ENCODE measurements at regions of chr15 and their contacts with region 1.

Region 1: DNA sequence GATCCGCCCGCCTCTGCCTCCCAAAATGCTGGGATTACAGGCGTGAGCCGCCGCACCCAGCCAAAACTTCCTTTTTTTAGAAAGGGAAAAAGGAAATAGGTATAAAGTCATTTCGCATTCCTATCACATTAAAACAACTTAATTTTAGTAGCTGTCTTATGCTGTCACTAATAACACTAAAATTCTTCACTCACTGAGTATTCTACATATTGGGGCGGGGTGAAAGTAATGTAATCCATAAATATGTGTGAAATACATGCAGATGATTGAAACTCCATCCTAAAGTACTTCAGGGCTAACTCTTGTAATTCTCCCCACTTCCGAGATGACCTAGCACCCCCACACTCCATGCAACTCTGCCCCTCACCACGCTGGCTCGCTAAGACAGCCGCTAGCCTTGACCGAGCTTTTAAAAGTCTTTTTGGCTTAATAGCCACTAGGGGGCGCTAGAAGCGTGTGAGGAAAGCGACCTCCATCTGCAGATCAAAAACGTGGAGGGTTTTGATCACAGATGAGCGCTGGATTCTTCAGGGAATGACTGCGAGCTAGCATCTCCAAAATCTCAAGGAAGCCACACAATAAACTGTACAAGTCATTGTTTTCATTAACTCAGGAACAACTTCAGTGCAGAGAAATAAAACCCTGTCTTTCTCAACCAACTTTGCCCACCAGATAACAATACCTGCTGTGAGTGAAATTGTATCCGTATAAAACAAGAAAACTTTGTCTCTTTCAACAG is 129.3 kb upstream of the IGF1R start:
- DNase-seq: peak; percentile 56
- H3K4me3 Mint-ChIP-seq: no peak overlapping the region
- H3K27ac Mint-ChIP-seq: no peak overlapping the region
- H3K4me1 Mint-ChIP-seq: peaks cover 4% of the 10 kb centered on the region
- H3K27me3 Mint-ChIP-seq: peaks cover 4% of the 10 kb centered on the region

Region 2: GRCh38 chr15:98455965-98456364 is 63.0 kb before region 1 on chr15:
- CTCF ChIA-PET with region 1: no interaction called
- POLR2A ChIA-PET with region 1: no interaction called
- intact Hi-C with region 1: no loop called
- DNase-seq: no peak
- H3K4me3 Mint-ChIP-seq: no peak overlapping the region
- H3K27ac Mint-ChIP-seq: no peak overlapping the region
- H3K4me1 Mint-ChIP-seq: no peaks in the 10 kb centered on the region
- H3K27me3 Mint-ChIP-seq: peaks cover 9% of the 10 kb centered on the region

Region 3: GRCh38 chr15:98548154-98548971 is 29.4 kb after region 1 on chr15:
- CTCF ChIA-PET with region 1: interaction called, 12 read pairs
- POLR2A ChIA-PET with region 1: no interaction called
- intact Hi-C with region 1: no loop called
- DNase-seq: peak; percentile 67
- H3K4me3 Mint-ChIP-seq: peak overlapping the region; percentile 73
- H3K27ac Mint-ChIP-seq: no peak overlapping the region
- H3K4me1 Mint-ChIP-seq: peaks cover 14% of the 10 kb centered on the region
- H3K27me3 Mint-ChIP-seq: peaks cover 48% of the 10 kb centered on the region

Region 4: DNA sequence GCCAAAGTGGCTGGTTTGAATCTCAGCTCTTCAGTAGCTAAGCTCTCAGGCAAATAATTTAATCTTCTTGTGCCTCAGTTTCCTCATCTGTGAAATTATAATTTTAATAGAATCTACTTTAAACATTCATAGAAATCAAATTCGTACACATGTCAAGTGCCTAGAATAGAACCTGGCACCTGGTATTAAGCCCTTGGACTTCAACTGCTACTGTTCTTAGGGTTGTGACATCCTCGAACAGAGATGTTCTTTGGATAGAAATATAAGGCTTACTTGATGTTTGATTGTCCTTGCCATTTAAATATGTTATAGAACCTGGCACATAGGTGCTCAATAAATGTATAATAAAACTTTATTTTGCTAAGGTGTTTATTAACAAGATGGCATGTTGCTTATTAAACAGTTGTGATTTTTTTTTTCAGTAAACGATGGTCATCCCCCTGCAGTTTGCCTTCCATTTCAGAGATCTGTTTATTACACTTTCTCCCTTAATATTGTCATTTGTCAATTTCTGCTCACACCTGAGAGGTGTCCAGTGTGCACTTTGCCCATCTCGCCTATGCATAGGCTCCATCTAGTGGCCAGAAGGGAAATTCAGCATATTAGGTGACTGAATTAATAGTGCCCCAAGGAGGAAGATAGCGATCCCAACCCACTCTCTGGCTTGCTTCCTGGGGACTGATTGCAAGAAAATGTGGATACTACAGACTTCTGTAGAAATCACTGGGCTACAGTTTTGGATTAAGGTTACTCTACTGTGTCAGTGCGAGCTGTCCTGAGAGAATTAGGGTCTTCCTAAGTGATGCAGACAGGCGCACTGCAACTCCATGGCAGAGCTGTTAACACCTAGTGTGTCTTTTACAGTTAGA is 140.1 kb after region 1 on chr15:
- CTCF ChIA-PET with region 1: interaction called, 114 read pairs
- POLR2A ChIA-PET with region 1: no interaction called
- intact Hi-C with region 1: loop called (anchors 1 kb)
- DNase-seq: peak; percentile 27
- H3K4me3 Mint-ChIP-seq: no peak overlapping the region
- H3K27ac Mint-ChIP-seq: no peak overlapping the region
- H3K4me1 Mint-ChIP-seq: peaks cover 4% of the 10 kb centered on the region
- H3K27me3 Mint-ChIP-seq: peaks cover 8% of the 10 kb centered on the region

Region 5: DNA sequence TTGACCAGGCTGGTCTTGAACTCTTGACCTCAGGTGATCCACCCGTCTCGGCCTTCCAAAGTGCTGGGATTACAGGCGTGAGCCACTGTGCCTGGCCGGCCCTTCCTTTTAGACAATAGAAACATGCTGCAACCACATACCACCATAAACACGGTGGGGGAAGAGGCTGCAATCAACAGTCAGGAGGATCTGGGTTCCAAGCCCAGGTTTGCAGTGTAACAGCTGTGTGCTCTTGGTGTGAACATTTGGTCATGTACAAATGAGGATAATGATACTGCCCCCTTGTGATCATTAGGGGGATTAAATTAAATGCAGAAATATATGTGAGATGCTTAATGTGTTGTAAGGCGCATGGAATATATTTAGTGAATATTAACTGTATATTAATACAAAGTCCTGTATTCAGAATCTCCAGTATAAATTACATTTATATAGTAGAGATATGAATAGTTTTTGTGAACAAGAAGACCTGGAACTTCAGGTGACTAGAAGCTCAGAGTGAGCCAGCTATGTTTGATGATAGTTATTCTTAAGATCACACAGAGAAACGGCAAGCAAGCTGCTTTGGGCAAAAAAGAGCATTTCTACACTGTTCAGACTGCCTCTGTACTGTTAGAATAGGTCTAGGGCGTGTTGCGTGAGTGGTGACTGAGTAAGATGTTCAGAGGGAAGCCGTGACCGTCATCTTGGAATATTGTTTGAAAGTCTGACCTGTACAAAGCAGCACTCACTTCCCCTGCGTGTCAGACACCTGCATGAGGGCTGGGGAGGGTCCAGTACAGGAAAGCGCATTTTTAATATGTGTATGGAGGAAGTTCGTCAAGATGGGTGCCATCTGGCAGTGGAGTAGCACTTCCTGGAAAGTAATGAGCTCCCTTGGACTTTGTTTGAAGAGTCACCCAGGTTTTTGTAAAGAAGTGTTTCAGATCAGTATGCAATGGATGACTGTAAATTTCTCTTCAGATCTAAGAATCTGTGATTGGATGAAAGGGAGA is 362.8 kb after region 1 on chr15:
- CTCF ChIA-PET with region 1: interaction called, 23 read pairs
- POLR2A ChIA-PET with region 1: no interaction called
- intact Hi-C with region 1: no loop called
- DNase-seq: no peak
- H3K4me3 Mint-ChIP-seq: no peak overlapping the region
- H3K27ac Mint-ChIP-seq: no peak overlapping the region
- H3K4me1 Mint-ChIP-seq: peaks cover 2% of the 10 kb centered on the region
- H3K27me3 Mint-ChIP-seq: no peaks in the 10 kb centered on the region